ENCODE measurements at regions of chr20 and their contacts with region 1.

Region 1: GRCh38 chr20:32779500-32780211 is 17.5 kb downstream of the DNMT3B start:
- DNase-seq: peak in 1 of 2 experiments; percentile 58
- H3K4me3 ChIP-seq: no peak overlapping the region
- H3K4me3 Mint-ChIP-seq: no peak overlapping the region
- H3K27ac Mint-ChIP-seq: no peak overlapping the region
- H3K4me1 ChIP-seq: peaks cover 31% of the 10 kb centered on the region
- H3K4me1 Mint-ChIP-seq: peaks cover 27% of the 10 kb centered on the region
- H3K27me3 ChIP-seq: no peaks in the 10 kb centered on the region
- H3K27me3 Mint-ChIP-seq: no peaks in the 10 kb centered on the region
- CTCF ChIP-seq: no peak

Region 2: DNA sequence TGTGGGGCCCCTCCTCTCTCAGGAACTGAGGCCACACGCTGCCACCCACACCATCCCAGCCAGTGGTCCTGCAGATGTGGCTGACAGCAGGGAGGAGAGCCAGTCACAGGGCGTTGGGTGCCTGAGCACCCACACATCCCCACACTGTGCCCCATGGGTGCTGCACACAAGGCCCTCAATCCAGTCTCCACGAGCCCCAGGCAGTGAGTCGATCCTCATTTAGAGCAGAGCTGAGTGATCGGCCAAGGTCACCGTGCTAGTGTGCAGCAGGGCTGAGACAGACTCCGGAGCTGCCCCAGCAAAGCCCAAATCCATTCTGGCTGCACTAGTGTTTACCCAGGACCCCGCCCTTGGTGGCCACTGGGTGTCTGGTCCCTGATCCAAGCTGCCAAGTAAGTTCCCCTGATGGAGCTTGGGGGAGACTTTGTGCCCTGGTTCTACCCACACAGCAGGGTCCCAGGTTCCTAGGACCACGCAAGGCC is 114.9 kb before region 1 on chr20:
- CTCF ChIA-PET with region 1: interaction called, 11 read pairs
- POLR2A ChIA-PET with region 1: no interaction called
- intact Hi-C with region 1: no loop called
- DNase-seq: no peak
- H3K4me3 ChIP-seq: no peak overlapping the region
- H3K4me3 Mint-ChIP-seq: no peak overlapping the region
- H3K27ac Mint-ChIP-seq: peak overlapping the region; percentile 18
- H3K4me1 ChIP-seq: peaks cover 9% of the 10 kb centered on the region
- H3K4me1 Mint-ChIP-seq: peaks cover 8% of the 10 kb centered on the region
- H3K27me3 ChIP-seq: no peaks in the 10 kb centered on the region
- H3K27me3 Mint-ChIP-seq: no peaks in the 10 kb centered on the region
- CTCF ChIP-seq: peak in 1 of 2 experiments; percentile 17

Region 3: GRCh38 chr20:32681175-32682084 is 98.2 kb before region 1 on chr20:
- CTCF ChIA-PET with region 1: interaction called, 155 read pairs
- POLR2A ChIA-PET with region 1: interaction called, 3 read pairs
- intact Hi-C with region 1: no loop called
- DNase-seq: peak; percentile 64 to 72
- H3K4me3 ChIP-seq: no peak overlapping the region
- H3K4me3 Mint-ChIP-seq: no peak overlapping the region
- H3K27ac Mint-ChIP-seq: peak overlapping the region; percentile 86
- H3K4me1 ChIP-seq: peaks cover 46% of the 10 kb centered on the region
- H3K4me1 Mint-ChIP-seq: peaks cover 49% of the 10 kb centered on the region
- H3K27me3 ChIP-seq: no peaks in the 10 kb centered on the region
- H3K27me3 Mint-ChIP-seq: no peaks in the 10 kb centered on the region
- CTCF ChIP-seq: no peak

Region 4: DNA sequence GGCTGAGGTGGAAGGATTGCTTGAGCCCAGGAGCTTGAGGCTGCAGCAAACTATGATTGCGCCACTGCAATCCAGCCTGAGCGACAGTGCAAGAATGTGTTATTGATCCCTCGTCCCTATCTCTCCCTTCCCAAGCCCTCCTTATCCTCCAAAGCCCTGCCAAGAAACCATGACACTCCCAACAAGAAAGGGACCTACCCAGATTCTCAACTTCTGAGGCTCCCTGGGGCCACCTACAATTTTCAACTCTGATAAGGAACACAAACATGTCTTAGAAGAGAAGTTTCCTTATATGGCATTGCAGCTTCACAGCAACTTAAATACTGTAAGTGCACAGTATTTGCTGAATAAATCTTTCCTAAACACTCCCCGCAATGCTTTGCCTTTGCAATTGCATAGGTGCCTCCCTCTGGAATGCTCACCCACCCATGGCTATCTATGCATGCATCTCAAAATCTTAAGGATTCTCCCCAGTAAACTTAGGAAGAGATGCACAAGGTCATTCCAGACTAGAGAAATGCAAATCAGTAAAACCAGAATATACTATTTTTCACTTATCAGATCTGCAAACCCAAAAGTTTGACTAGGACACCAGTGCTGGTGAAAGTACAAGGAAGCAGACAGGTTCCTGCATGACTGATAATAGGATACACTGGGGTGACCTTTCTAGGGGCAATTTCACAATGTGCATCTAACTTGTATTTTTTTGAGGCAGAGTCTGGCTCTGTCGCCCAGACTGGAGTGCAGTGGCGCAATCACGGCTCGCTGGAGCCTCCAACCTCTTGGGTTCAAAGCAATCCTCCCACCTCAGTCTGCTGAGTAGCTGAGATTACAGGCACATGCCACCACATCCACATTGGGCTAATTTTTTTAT is 48.0 kb before region 1 on chr20:
- CTCF ChIA-PET with region 1: interaction called, 19 read pairs
- POLR2A ChIA-PET with region 1: interaction called, 6 read pairs
- intact Hi-C with region 1: loop called (anchors 1 kb)
- DNase-seq: peak; percentile 98 to 99
- H3K4me3 ChIP-seq: no peak overlapping the region
- H3K4me3 Mint-ChIP-seq: peak overlapping the region; percentile 20
- H3K27ac Mint-ChIP-seq: peak overlapping the region; percentile 88
- H3K4me1 ChIP-seq: peaks cover 51% of the 10 kb centered on the region
- H3K4me1 Mint-ChIP-seq: peaks cover 54% of the 10 kb centered on the region
- H3K27me3 ChIP-seq: no peaks in the 10 kb centered on the region
- H3K27me3 Mint-ChIP-seq: no peaks in the 10 kb centered on the region
- CTCF ChIP-seq: no peak

Region 5: GRCh38 chr20:32762149-32762753 is 17.4 kb before region 1 on chr20 and contains the start of gene DNMT3B:
- CTCF ChIA-PET with region 1: interaction called, 53 read pairs
- POLR2A ChIA-PET with region 1: interaction called, 10 read pairs
- intact Hi-C with region 1: loop called (anchors 1 kb)
- DNase-seq: peak; percentile 97 to 99
- H3K4me3 ChIP-seq: peak within 1 kb of the TSS; percentile 87
- H3K4me3 Mint-ChIP-seq: peak within 1 kb of the TSS; percentile 100
- H3K27ac Mint-ChIP-seq: peak within 1 kb of the TSS; percentile 93
- H3K4me1 ChIP-seq: peaks cover 25% of the 10 kb centered on the region
- H3K4me1 Mint-ChIP-seq: peaks cover 33% of the 10 kb centered on the region
- H3K27me3 ChIP-seq: no peaks in the 10 kb centered on the region
- H3K27me3 Mint-ChIP-seq: no peaks in the 10 kb centered on the region
- CTCF ChIP-seq: peak in 1 of 2 experiments; percentile 31
- total RNA-seq, gene DNMT3B: 95.5 and 105 TPM in 2 replicates

Region 6: DNA sequence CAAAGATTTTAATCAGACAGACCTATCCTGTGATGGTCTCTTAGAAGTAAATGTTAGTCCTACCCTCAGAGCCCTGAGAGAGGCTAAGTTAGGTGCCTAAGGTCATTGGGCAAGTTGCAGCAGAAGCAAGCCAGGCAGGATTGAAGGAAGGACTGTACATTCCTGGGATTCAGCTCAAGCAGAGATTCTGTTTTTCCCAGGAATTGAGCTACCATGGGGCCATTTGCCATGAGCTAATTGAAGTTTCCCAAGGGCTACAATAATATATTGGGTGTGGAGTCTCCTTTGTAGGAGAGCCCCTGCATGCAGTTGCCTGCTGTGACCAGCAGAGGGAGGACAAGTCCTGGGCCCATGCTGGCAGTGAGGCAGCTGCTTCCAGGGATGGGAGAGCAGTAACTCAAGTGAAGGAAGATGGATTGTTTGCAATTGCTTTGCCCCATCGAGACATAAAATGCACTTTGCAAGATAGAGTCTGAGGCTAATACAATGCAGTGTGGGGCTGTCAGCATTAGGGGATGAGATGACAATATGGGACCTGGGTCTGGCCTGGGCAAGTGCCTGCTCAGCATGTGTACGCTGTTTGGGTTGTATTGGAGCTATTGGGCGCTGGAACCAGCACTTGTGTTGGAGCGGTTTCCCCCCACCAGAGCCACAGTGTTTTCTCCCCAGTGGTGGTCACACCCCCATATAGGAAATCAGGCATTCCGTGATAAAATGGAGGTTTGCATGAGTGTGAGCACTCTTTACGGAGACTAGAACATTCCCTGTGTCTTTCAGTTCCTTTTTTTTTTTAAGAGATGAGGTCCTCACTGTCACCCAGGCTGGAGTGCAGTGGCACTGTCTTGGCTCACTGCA is 10.5 kb after region 1 on chr20:
- CTCF ChIA-PET with region 1: interaction called, 37 read pairs
- POLR2A ChIA-PET with region 1: no interaction called
- intact Hi-C with region 1: no loop called
- DNase-seq: peak; percentile 88 to 91
- H3K4me3 ChIP-seq: no peak overlapping the region
- H3K4me3 Mint-ChIP-seq: no peak overlapping the region
- H3K27ac Mint-ChIP-seq: no peak overlapping the region
- H3K4me1 ChIP-seq: peaks cover 13% of the 10 kb centered on the region; the same call in 1 of the 2 replicates
- H3K4me1 Mint-ChIP-seq: no peaks in the 10 kb centered on the region
- H3K27me3 ChIP-seq: no peaks in the 10 kb centered on the region
- H3K27me3 Mint-ChIP-seq: no peaks in the 10 kb centered on the region
- CTCF ChIP-seq: peak; percentile 100

Region 7: DNA sequence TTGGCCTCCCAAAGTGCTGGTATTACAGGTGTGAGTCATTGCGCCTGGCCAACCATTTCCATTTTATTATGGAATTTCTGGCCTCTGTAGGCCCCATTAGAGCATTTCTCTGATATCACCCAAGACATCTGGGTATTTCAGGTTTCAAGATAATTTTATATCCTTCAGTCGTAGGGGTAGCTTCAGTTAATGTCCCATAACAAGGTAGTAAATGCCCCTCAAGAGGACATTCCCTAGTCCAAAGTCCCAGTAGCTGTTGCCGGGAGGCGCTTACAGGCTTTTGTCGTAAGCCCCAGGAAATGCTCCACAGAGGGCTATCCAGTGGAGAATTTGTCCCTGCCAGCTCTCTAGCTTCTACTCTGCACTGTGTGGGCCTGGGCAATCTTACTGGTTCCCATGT is 103.4 kb after region 1 on chr20:
- CTCF ChIA-PET with region 1: no interaction called
- POLR2A ChIA-PET with region 1: no interaction called
- intact Hi-C with region 1: no loop called
- DNase-seq: no peak
- H3K4me3 ChIP-seq: no peak overlapping the region
- H3K4me3 Mint-ChIP-seq: no peak overlapping the region
- H3K27ac Mint-ChIP-seq: no peak overlapping the region
- H3K4me1 ChIP-seq: no peaks in the 10 kb centered on the region
- H3K4me1 Mint-ChIP-seq: no peaks in the 10 kb centered on the region
- H3K27me3 ChIP-seq: no peaks in the 10 kb centered on the region
- H3K27me3 Mint-ChIP-seq: no peaks in the 10 kb centered on the region
- CTCF ChIP-seq: no peak